RWPE1 (cell line): ENCODE measurements at regions of chr9 and their contacts with region 1.

Region 1: GRCh38 chr9:129177791-129178559 is at the start of gene IER5L:
- DNase-seq: peak; percentile 100
- H3K27ac ChIP-seq: peak within 1 kb of the TSS; percentile 99
- CTCF ChIP-seq: no peak

Region 2: DNA sequence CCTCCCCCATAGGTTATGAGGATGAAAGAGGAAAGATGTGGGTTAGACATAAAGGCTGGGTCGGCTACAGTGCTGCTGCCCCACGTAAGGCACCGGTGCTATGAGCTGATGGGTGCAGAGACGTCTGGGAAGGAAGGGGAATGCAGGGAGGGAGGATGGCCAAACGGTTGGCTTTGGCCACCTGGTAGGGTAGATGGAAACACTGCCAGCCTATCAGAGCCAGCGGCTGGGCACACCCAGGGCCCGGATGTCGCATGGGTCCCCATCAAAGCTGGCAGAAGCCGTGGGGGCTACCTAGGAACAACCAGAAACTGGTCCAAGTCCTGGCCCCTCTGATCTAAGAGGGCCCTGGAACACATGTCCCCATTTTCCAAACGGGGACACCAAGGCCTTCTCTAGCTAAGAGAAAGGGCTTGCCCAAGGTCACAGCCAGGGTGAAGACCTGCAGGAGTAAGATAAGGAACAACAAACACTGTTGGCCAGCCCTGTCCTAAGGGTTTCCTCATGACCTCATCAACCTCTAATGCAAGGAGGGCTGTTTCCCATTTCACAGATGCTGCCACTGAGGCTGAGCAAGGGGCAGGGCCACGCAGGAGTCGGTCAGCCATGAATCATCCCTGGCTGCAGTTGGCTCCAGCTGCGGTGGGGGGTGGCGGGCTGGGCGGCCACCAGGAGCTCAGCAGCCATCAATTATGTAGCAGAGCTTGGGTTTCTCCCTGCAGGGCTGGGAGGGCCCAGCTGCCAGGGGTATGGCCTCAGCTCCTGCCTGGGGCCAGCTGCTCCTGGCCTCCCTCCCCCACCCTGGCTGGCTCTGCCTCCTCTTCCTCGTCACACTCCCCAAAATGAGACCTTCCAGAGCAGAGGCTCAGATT is 154.7 kb before region 1 on chr9:
- CTCF ChIA-PET with region 1: no interaction called
- POLR2A ChIA-PET with region 1: no interaction called
- DNase-seq: peak; percentile 63
- H3K27ac ChIP-seq: peak overlapping the region; percentile 79
- CTCF ChIP-seq: no peak

Region 3: GRCh38 chr9:129131300-129132145 is 46.5 kb before region 1 on chr9:
- CTCF ChIA-PET with region 1: interaction called, 50 read pairs
- POLR2A ChIA-PET with region 1: interaction called, 3 read pairs
- DNase-seq: peak; percentile 89
- H3K27ac ChIP-seq: peak overlapping the region; percentile 25
- CTCF ChIP-seq: peak; percentile 100

Region 4: GRCh38 chr9:129166623-129167557 is 11.1 kb before region 1 on chr9:
- CTCF ChIA-PET with region 1: interaction called, 10 read pairs
- POLR2A ChIA-PET with region 1: interaction called, 3 read pairs
- DNase-seq: peak; percentile 100
- H3K27ac ChIP-seq: peak overlapping the region; percentile 90
- CTCF ChIP-seq: no peak

Region 5: DNA sequence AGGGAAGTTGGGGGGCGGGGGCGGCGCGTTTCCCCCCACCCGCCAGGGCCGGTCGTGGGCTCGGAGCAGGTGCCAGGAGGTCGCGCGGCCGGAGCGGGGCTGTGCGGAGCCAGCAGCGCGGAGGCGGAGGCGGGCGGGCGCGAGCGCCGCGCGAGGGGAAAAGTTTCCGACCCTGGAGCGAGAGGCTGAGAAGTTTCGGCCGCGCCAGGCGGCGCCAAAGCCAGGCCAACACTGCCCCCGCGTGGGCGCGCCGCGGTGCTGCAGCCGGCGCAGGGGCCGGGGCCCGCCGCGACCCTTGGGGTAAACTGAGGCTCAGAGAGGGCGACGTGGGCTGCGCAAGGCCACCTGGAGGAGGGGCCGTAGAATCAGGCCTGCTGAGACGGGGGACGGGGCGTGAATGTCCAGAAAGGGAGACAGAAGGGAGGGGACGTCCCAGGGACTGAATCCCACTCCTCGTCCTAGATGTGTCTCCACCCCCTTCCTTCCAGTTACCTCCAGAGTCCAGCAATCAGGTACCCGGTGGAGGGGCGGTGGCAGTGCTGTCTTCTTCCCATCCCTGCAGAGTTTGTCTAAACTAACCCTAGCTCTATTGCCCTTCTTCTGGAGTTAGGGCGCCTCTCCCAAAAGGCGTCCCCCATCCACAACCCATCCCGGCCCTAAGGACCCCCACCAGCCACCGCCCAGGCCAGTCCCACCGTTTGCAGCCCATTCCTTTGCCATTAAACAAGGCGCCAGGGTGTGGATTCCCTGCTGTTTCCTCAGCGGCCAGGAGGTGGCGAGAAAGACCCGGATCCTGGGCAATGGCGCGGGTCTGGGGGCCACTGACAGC is 432.7 kb after region 1 on chr9:
- CTCF ChIA-PET with region 1: interaction called, 37 read pairs
- POLR2A ChIA-PET with region 1: interaction called, 3 read pairs
- DNase-seq: peak; percentile 88
- H3K27ac ChIP-seq: peak overlapping the region; percentile 83
- CTCF ChIP-seq: peak; percentile 99

Region 6: GRCh38 chr9:129626079-129626624 is 448.2 kb after region 1 on chr9 and contains the start of gene NTMT1:
- CTCF ChIA-PET with region 1: interaction called, 18 read pairs
- POLR2A ChIA-PET with region 1: interaction called, 3 read pairs
- DNase-seq: peak; percentile 94
- H3K27ac ChIP-seq: peak within 1 kb of the TSS; percentile 80
- CTCF ChIP-seq: no peak